ENCODE measurements at regions of chr5 and their contacts with region 1.

Region 1: DNA sequence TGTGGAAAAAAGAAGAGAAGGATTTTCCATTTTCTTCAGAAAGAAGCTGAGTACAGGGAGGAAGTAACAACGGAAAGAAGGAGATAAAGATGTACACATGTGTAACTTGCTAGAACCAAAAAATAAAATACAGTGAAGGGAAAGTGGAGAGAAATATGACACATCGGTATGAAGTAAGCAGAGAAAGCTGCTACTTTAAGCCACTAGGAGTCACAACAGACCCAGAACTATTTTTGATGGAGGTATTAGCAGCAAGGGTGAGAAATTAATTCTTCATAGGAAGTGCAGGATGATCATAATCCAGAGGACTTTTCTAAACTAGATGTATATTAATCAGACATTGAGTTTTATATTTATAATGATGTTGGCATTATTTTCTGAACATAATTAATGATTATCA is 88.5 kb downstream of the FAM174A start:
- DNase-seq: peak in 4 of 5 donors; percentile 28 to 49 (median 34)
- H3K4me3 ChIP-seq: no peak overlapping the region
- H3K4me3 Mint-ChIP-seq: no peak overlapping the region
- H3K27ac ChIP-seq: no peak overlapping the region
- H3K27ac Mint-ChIP-seq: no peak overlapping the region
- H3K4me1 ChIP-seq: no peaks in the 10 kb centered on the region
- H3K4me1 Mint-ChIP-seq: no peaks in the 10 kb centered on the region
- H3K27me3 ChIP-seq: no peaks in the 10 kb centered on the region
- H3K27me3 Mint-ChIP-seq: peaks cover 0 to 2% of the 10 kb centered on the region in 2 donors

Region 2: DNA sequence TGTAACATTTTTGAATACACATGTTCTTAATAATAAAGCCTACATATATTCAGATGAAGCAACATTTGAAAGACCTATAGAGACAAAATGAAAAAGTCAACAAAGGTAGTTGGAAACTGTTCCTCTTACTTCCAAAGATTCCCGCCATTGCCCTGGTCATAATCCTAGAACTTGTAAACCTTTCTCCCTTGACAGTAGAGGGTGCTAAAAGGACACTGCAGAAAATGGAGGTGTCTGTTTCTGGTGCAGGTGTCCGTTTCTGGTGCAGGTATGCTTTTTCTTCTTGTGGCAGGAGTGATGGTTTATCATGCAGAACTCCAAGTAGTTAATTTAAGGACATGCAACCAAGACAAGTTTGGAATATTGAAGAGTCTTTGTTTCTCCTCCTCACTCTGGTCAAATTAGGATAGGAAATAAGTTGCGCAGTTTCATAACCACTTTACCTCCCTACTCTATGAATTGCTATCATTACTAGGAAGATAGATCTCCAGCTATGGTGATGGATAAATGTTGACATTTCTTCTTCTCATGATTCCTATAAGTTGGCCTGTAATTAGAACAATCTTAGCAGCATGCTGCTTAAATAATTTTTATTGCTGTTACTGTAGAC is 144.5 kb before region 1 on chr5:
- CTCF ChIA-PET with region 1: no interaction called
- POLR2A ChIA-PET with region 1: no interaction called
- intact Hi-C with region 1: loop called (anchors 1 kb)
- DNase-seq: peak in 4 of 5 donors; percentile 26 to 34 (median 32)
- H3K4me3 ChIP-seq: no peak overlapping the region
- H3K4me3 Mint-ChIP-seq: no peak overlapping the region
- H3K27ac ChIP-seq: no peak overlapping the region
- H3K27ac Mint-ChIP-seq: no peak overlapping the region
- H3K4me1 ChIP-seq: no peaks in the 10 kb centered on the region
- H3K4me1 Mint-ChIP-seq: no peaks in the 10 kb centered on the region
- H3K27me3 ChIP-seq: no peaks in the 10 kb centered on the region
- H3K27me3 Mint-ChIP-seq: no peaks in the 10 kb centered on the region

Region 3: GRCh38 chr5:100553209-100553608 is 70.5 kb before region 1 on chr5:
- CTCF ChIA-PET with region 1: no interaction called
- POLR2A ChIA-PET with region 1: no interaction called
- intact Hi-C with region 1: no loop called
- DNase-seq: no peak
- H3K4me3 ChIP-seq: no peak overlapping the region
- H3K4me3 Mint-ChIP-seq: no peak overlapping the region
- H3K27ac ChIP-seq: no peak overlapping the region
- H3K27ac Mint-ChIP-seq: no peak overlapping the region
- H3K4me1 ChIP-seq: peaks cover 6% of the 10 kb centered on the region
- H3K4me1 Mint-ChIP-seq: peaks cover 15 to 25% (median 16%) of the 10 kb centered on the region in 4 donors
- H3K27me3 ChIP-seq: no peaks in the 10 kb centered on the region
- H3K27me3 Mint-ChIP-seq: no peaks in the 10 kb centered on the region

Region 4: DNA sequence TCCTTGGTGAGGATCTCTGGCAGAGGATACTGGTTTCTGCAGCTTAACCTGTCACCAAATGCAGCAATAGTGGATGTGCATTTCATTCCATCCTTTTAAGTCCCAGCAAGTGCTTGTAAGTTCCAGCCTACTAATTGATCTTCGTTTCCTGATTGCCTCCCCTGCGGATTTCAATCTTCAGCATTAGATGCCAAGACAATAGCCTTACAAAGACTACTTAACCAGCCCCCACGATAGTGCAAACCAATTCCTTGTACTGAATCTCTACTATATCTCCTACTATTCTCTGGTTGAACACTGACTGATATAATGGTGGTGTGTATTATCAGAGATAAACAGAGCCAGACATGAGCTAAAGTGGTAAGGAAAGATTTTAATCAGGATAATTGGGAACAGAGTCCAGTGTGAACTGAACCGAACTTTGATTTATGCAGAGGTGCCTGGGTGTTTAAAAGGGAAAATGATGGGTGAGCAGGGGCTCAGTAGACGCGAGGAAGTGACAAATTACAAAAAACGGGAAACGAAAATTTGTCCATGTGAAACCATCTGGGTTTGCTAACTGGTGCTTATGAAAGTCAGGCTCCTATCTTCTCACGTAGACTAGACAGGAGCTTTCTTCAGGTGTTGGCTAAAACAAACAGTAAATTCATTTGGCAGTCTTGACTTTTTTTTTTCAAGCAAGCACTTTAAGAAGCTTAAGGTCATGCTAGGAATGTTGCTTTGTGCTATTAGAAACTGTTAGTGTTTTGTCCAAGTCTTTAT is 386.2 kb after region 1 on chr5:
- CTCF ChIA-PET with region 1: interaction called, 3 read pairs
- POLR2A ChIA-PET with region 1: no interaction called
- intact Hi-C with region 1: loop called (anchors 1 kb)
- DNase-seq: no peak
- H3K4me3 ChIP-seq: no peak overlapping the region
- H3K4me3 Mint-ChIP-seq: no peak overlapping the region
- H3K27ac ChIP-seq: no peak overlapping the region
- H3K27ac Mint-ChIP-seq: no peak overlapping the region
- H3K4me1 ChIP-seq: no peaks in the 10 kb centered on the region
- H3K4me1 Mint-ChIP-seq: peaks cover 0 to 3% (median under 1%) of the 10 kb centered on the region in 4 donors
- H3K27me3 ChIP-seq: no peaks in the 10 kb centered on the region
- H3K27me3 Mint-ChIP-seq: no peaks in the 10 kb centered on the region

Region 5: DNA sequence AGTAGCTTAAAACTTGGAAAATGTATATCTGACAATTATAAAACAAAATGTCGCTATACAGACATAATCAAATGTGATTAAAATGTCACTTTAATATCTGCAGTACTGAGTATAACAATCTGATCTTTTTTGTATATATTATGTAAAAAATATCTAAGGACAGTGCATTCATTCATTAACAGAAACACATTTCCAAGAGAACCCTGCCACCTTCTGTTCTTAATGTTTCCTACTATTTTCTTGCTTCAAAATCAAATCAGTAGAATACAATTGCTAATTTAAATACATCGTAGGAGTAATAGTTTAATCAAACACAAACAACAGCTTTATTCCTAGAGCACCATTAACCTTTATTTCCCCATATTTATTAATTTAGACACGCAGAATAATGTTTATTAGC is 422.0 kb after region 1 on chr5:
- CTCF ChIA-PET with region 1: interaction called, 7 read pairs
- POLR2A ChIA-PET with region 1: no interaction called
- intact Hi-C with region 1: loop called (anchors 1 kb)
- DNase-seq: peak in 4 of 5 donors; percentile 15 to 33 (median 27)
- H3K4me3 ChIP-seq: no peak overlapping the region
- H3K4me3 Mint-ChIP-seq: no peak overlapping the region
- H3K27ac ChIP-seq: no peak overlapping the region
- H3K27ac Mint-ChIP-seq: no peak overlapping the region
- H3K4me1 ChIP-seq: peaks cover 9% of the 10 kb centered on the region
- H3K4me1 Mint-ChIP-seq: peaks cover 5 to 11% (median 7%) of the 10 kb centered on the region in 4 donors
- H3K27me3 ChIP-seq: no peaks in the 10 kb centered on the region
- H3K27me3 Mint-ChIP-seq: no peaks in the 10 kb centered on the region

Region 6: GRCh38 chr5:101390151-101390908 is 766.6 kb after region 1 on chr5:
- CTCF ChIA-PET with region 1: interaction called, 7 read pairs
- POLR2A ChIA-PET with region 1: no interaction called
- intact Hi-C with region 1: loop called (anchors 1 kb)
- DNase-seq: peak in 3 of 5 donors; percentile 7 to 13 (median 9)
- H3K4me3 ChIP-seq: no peak overlapping the region
- H3K4me3 Mint-ChIP-seq: no peak overlapping the region
- H3K27ac ChIP-seq: no peak overlapping the region
- H3K27ac Mint-ChIP-seq: no peak overlapping the region
- H3K4me1 ChIP-seq: no peaks in the 10 kb centered on the region
- H3K4me1 Mint-ChIP-seq: no peaks in the 10 kb centered on the region
- H3K27me3 ChIP-seq: no peaks in the 10 kb centered on the region
- H3K27me3 Mint-ChIP-seq: no peaks in the 10 kb centered on the region

Region 7: DNA sequence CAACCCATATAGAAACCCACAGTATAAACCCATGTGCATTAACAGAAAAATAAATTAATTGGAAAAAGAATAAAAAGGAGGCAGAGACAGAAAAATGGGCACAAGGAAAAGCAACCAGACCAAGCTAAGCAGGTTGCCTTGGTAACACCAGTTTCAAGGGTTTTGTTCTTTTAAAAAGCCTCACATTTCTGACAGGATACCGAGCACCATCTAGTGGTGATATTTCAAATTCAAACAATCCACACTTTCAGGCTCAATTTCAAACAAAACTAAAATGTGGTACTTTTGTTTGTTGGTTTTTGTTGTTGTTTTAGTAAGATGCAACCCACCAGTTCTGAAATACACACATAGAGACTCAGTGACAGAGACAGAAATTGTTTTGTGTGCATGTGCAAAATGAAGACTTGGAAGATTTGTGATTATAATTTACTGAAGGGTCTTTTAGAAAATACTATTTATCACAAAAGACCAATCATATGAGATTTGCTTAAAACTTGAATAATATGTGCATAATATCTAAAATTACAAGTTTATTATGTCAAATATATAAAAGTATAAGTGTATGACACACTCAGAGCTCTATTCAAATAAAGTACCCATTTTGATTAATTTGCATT is 1354.1 kb after region 1 on chr5:
- CTCF ChIA-PET with region 1: no interaction called
- POLR2A ChIA-PET with region 1: no interaction called
- intact Hi-C with region 1: loop called (anchors 10 kb)
- DNase-seq: peak in 3 of 5 donors; percentile 2 to 18 (median 7)
- H3K4me3 ChIP-seq: no peak overlapping the region
- H3K4me3 Mint-ChIP-seq: no peak overlapping the region
- H3K27ac ChIP-seq: no peak overlapping the region
- H3K27ac Mint-ChIP-seq: no peak overlapping the region
- H3K4me1 ChIP-seq: no peaks in the 10 kb centered on the region
- H3K4me1 Mint-ChIP-seq: no peaks in the 10 kb centered on the region
- H3K27me3 ChIP-seq: no peaks in the 10 kb centered on the region
- H3K27me3 Mint-ChIP-seq: no peaks in the 10 kb centered on the region